ENCODE measurements at regions of chrX and their contacts with region 1.

Region 1: DNA sequence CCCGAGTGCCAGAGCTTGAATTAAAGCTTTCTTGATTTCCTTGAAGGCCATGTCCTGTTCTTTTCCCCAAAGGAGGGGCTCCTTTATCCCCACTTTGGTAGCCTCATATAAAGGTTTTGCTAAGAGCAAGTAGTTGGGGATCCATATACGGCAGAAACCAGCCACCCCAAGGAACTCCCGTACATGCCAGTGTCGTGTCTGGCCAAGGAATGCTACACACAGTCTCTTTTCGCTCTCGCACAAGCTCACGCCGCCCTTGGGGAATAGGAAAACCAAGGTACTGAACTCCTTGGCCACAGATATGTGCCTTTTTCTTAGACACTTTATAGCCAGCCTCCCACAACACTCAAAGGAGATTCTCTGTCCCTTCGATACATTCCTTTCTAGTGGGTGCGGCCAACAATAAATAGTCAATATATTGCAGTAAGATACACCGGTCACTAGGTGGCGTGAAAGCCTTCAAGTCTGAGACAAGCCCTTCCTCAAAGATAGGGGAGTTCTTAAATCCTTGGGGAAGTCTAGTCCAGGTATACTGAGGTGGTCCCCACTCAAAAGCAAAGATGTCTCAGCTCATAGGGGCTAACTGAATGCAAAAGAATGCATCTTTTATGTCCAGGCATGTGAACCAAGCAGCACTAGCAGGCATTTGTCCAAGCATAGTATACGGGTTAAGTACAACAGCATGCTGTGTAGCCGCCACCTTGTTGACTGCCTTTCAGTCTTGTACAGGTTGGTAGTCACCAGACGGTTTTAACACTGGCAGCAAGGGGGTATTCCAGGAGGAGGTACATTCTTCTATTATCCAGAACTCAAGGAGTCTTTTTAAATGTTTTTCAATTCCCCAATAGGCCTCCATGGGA is 57.8 kb upstream of the XAGE1B start:
- H3K4me3 ChIP-seq: no peak overlapping the region
- H3K27ac ChIP-seq: no peak overlapping the region
- H3K4me1 ChIP-seq: no peaks in the 10 kb centered on the region
- CTCF ChIP-seq: no peak

Region 2: DNA sequence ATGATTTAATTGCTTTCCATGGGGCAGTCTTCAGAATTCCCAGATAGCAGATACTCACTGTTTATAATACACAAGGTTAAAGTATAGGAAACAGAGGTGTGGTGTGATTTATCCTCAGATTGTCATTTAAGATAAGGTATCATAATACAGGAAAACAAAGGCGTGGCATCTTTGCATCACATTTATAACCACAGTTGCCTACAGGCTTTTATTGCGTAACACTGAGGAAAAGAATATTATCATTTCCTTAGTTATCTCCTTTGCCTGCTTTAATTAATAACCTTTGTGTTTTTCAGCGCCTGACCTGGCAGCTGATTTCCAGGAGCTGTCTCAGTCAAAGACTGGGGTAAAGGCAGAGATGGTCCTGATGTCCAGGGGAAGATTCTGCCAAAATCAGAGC is 11.2 kb after region 1 on chrX:
- CTCF ChIA-PET with region 1: interaction called, 10 read pairs
- POLR2A ChIA-PET with region 1: no interaction called
- H3K4me3 ChIP-seq: no peak overlapping the region
- H3K27ac ChIP-seq: no peak overlapping the region
- H3K4me1 ChIP-seq: no peaks in the 10 kb centered on the region
- CTCF ChIP-seq: no peak